ENCODE measurements at regions of chr10 and their contacts with region 1.

Region 1: GRCh38 chr10:103470761-103471653 is 8.0 kb downstream of the CALHM3 start:
- DNase-seq: peak; percentile 93 to 99 (median 98)
- H3K4me3 ChIP-seq: peak overlapping the region in 4 of 7 experiments; percentile 11 to 61 (median 36)
- H3K27ac ChIP-seq: peak overlapping the region; percentile 25 to 47
- H3K4me1 ChIP-seq: peaks cover 4 to 71% (median 31%) of the 10 kb centered on the region in 4 experiments
- H3K27me3 ChIP-seq: peaks cover 0 to 3% (median 0%) of the 10 kb centered on the region in 5 experiments

Region 2: DNA sequence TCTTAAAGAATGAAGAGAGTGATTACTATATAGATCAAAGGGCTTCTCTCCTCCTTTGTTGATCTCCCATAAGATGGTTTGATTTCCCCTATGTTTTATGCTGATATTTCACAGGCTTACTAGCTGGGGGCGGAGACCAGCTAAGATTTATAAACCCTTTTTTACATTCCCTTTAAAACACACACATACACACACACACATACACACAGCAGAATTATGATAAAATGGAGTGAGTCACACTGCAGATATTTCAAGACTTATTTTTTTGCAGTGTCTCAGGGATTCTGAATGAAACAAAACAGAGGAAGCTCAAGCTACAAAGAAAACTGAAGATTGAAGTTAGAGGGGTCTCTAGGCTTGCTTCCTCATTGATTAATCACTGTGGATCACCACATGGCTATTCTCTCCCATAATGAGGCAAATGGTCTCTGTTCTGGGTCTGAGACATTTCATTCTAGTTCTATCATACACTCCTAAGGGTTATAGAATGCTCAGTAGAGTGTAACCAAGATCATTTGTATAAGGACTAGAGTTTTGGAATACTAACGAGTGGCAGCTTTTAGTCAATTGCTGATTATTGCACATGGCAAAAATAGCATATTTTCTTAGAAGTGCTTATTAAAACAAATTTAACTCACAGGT is 175.5 kb before region 1 on chr10:
- CTCF ChIA-PET with region 1: no interaction called
- POLR2A ChIA-PET with region 1: no interaction called
- DNase-seq: no peak
- H3K4me3 ChIP-seq: no peak overlapping the region
- H3K27ac ChIP-seq: no peak overlapping the region
- H3K4me1 ChIP-seq: no peaks in the 10 kb centered on the region
- H3K27me3 ChIP-seq: peaks cover 0 to 2% (median 0%) of the 10 kb centered on the region in 5 experiments

Region 3: GRCh38 chr10:103451831-103452505 is 19.0 kb before region 1 on chr10 and contains the start of gene CALHM2:
- CTCF ChIA-PET with region 1: interaction called, 76 read pairs
- POLR2A ChIA-PET with region 1: interaction called, 4 read pairs
- DNase-seq: peak; percentile 36 to 71 (median 61)
- H3K4me3 ChIP-seq: peak within 1 kb of the TSS; percentile 61 to 92 (median 72)
- H3K27ac ChIP-seq: peak within 1 kb of the TSS in 1 of 2 experiments; percentile 2
- H3K4me1 ChIP-seq: peaks cover 0 to 38% (median 32%) of the 10 kb centered on the region in 4 experiments
- H3K27me3 ChIP-seq: peaks cover 0 to 2% (median 0%) of the 10 kb centered on the region in 5 experiments